ENCODE measurements at regions of chrX and their contacts with region 1.

Region 1: GRCh38 chrX:107654872-107655761 is 26.8 kb downstream of the PRPS1 start:
- DNase-seq: peak; percentile 89 to 96
- H3K4me3 ChIP-seq: peak overlapping the region; percentile 39; the same call in 1 of the 2 replicates
- H3K27ac ChIP-seq: peak overlapping the region; percentile 86
- H3K4me1 ChIP-seq: peaks cover 29% of the 10 kb centered on the region
- H3K27me3 ChIP-seq: no peaks in the 10 kb centered on the region
- CTCF ChIP-seq: peak; percentile 93

Region 2: GRCh38 chrX:106894392-106894909 is 760.7 kb before region 1 on chrX:
- CTCF ChIA-PET with region 1: no interaction called
- POLR2A ChIA-PET with region 1: no interaction called
- intact Hi-C with region 1: loop called (anchors 10 kb)
- DNase-seq: peak; percentile 56 to 68
- H3K4me3 ChIP-seq: no peak overlapping the region
- H3K27ac ChIP-seq: peak overlapping the region; percentile 62
- H3K4me1 ChIP-seq: peaks cover 35% of the 10 kb centered on the region
- H3K27me3 ChIP-seq: no peaks in the 10 kb centered on the region
- CTCF ChIP-seq: peak; percentile 86

Region 3: GRCh38 chrX:107448998-107449835 is 205.9 kb before region 1 on chrX and contains the start of gene FRMPD3:
- CTCF ChIA-PET with region 1: no interaction called
- POLR2A ChIA-PET with region 1: no interaction called
- intact Hi-C with region 1: loop called (anchors 10 kb)
- DNase-seq: peak in 1 of 2 experiments; percentile 25
- H3K4me3 ChIP-seq: peak within 1 kb of the TSS; percentile 74
- H3K27ac ChIP-seq: no peak within 1 kb of the TSS
- H3K4me1 ChIP-seq: peaks cover 9% of the 10 kb centered on the region
- H3K27me3 ChIP-seq: no peaks in the 10 kb centered on the region
- CTCF ChIP-seq: no peak
- total RNA-seq, gene FRMPD3: 0.20 and 0.23 TPM in 2 replicates

Region 4: DNA sequence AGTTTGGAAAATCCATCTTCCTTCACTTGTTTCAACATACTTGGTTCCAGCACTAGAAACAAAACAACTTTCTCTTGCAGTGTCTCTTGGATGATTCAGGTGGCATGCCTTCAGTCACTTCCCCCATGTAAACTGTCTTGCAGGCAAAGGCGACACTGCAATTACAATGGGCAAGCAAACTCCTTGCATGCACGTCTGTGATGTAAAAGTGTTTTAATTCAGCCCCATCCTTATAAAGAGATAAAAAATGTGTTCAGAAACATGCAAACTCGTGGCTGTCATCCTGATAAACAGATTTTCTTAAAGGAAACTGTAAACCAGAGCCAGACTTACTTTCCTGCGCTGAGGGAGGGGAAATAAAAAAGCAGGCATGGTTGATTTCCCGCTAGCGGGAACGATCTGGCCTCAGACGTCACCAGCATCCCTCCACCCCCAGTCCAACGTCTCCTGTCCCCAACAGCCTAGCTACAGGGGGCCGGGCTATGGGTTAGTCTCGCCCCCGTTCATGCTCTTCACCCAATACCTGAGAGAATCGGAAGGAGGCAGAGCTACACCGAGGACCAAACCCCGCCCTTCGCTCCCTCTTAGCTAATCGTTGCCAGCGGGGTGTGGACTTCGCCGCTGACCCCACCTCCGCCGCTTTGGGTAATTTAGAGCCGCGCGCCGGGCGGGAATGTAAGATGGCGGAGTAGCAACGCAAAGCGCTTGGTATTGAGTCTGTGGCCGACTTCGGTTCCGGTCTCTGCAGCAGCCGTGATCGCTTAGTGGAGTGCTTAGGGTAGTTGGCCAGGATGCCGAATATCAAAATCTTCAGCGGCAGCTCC is 27.1 kb before region 1 on chrX and contains the start of gene PRPS1:
- CTCF ChIA-PET with region 1: interaction called, 4 read pairs
- POLR2A ChIA-PET with region 1: interaction called, 4 read pairs
- intact Hi-C with region 1: loop called (anchors 2 kb)
- DNase-seq: peak; percentile 93 to 97
- H3K4me3 ChIP-seq: peak within 1 kb of the TSS; percentile 74
- H3K27ac ChIP-seq: peak within 1 kb of the TSS; percentile 57
- H3K4me1 ChIP-seq: peaks cover 40% of the 10 kb centered on the region
- H3K27me3 ChIP-seq: no peaks in the 10 kb centered on the region
- CTCF ChIP-seq: no peak
- total RNA-seq, gene PRPS1: 67.4 and 67.9 TPM in 2 replicates

Region 5: GRCh38 chrX:107716816-107717700 is 61.9 kb after region 1 on chrX:
- CTCF ChIA-PET with region 1: interaction called, 4 read pairs
- POLR2A ChIA-PET with region 1: no interaction called
- intact Hi-C with region 1: loop called (anchors 1 kb)
- DNase-seq: peak; percentile 74 to 80
- H3K4me3 ChIP-seq: peak overlapping the region; percentile 91
- H3K27ac ChIP-seq: 0 out of 2 replicates have a peak overlapping the region, but pooled peaks have one; percentile 95
- H3K4me1 ChIP-seq: peaks cover 43% of the 10 kb centered on the region
- H3K27me3 ChIP-seq: no peaks in the 10 kb centered on the region
- CTCF ChIP-seq: no peak

Region 6: GRCh38 chrX:107741404-107741790 is 86.3 kb after region 1 on chrX:
- CTCF ChIA-PET with region 1: no interaction called
- POLR2A ChIA-PET with region 1: no interaction called
- intact Hi-C with region 1: no loop called
- DNase-seq: no peak
- H3K4me3 ChIP-seq: no peak overlapping the region; the same call in 1 of the 2 replicates
- H3K27ac ChIP-seq: peak overlapping the region; percentile 58; the same call in 1 of the 2 replicates
- H3K4me1 ChIP-seq: peaks cover 38% of the 10 kb centered on the region
- H3K27me3 ChIP-seq: no peaks in the 10 kb centered on the region
- CTCF ChIP-seq: no peak

Region 7: GRCh38 chrX:107776649-107777535 is 121.8 kb after region 1 on chrX:
- CTCF ChIA-PET with region 1: interaction called, 33 read pairs
- POLR2A ChIA-PET with region 1: no interaction called
- intact Hi-C with region 1: loop called (anchors 1 kb)
- DNase-seq: peak; percentile 78 to 85
- H3K4me3 ChIP-seq: peak overlapping the region; percentile 82; the same call in 1 of the 2 replicates
- H3K27ac ChIP-seq: no peak overlapping the region
- H3K4me1 ChIP-seq: peaks cover 37% of the 10 kb centered on the region
- H3K27me3 ChIP-seq: no peaks in the 10 kb centered on the region
- CTCF ChIP-seq: peak; percentile 93

Region 8: GRCh38 chrX:108070891-108071290 is 415.8 kb after region 1 on chrX:
- CTCF ChIA-PET with region 1: no interaction called
- POLR2A ChIA-PET with region 1: no interaction called
- intact Hi-C with region 1: loop called (anchors 2 kb)
- DNase-seq: peak; percentile 19 to 73
- H3K4me3 ChIP-seq: no peak overlapping the region
- H3K27ac ChIP-seq: peak overlapping the region; percentile 44; the same call in 1 of the 2 replicates
- H3K4me1 ChIP-seq: peaks cover 19% of the 10 kb centered on the region
- H3K27me3 ChIP-seq: no peaks in the 10 kb centered on the region
- CTCF ChIP-seq: no peak

Measured in PC-9 (cell line).